ENCODE measurements at regions of chr3 and their contacts with region 1.

Region 1: DNA sequence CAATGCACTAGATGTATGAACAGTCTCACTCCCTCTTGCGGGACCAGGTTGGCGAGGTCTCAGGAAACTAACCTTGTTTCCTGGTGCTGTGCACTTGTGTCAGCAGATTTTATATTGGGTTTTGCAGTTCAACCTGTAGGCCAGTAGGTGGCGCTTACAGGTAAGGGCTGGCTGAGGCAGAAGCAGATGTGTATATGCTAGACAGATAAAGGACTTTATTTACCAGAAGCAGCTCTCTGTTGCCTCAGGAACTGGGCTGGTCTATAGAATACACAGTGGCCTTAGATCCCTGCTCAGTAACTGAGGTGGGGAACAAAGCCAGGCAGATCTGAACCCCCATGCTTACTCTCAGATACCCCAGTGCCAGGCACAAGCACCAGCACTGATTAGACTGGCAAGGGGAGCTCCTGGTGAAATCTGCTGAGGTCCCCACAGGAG is 296.8 kb downstream of the DOCK3 start:
- DNase-seq: no peak
- ATAC-seq: peak; percentile 93
- H3K4me3 ChIP-seq: no peak overlapping the region
- H3K27ac ChIP-seq: no peak overlapping the region
- H3K4me1 ChIP-seq: no peaks in the 10 kb centered on the region
- H3K27me3 ChIP-seq: no peaks in the 10 kb centered on the region
- CTCF ChIP-seq: peak; percentile 88 to 96 (median 91)
- EP300 ChIP-seq: no peak
- POLR2A ChIP-seq: no peak
- RAD21 ChIP-seq: peak; percentile 84

Region 2: GRCh38 chr3:50777680-50778079 is 193.8 kb before region 1 on chr3:
- CTCF ChIA-PET with region 1: no interaction called
- POLR2A ChIA-PET with region 1: no interaction called
- RAD21 ChIA-PET with region 1: no interaction called
- SMC1A ChIA-PET with region 1: no interaction called
- in situ Hi-C with region 1: no loop called
- intact Hi-C with region 1: no loop called
- DNase-seq: no peak
- ATAC-seq: no peak
- H3K4me3 ChIP-seq: no peak overlapping the region
- H3K27ac ChIP-seq: no peak overlapping the region
- H3K4me1 ChIP-seq: no peaks in the 10 kb centered on the region
- H3K27me3 ChIP-seq: no peaks in the 10 kb centered on the region
- CTCF ChIP-seq: no peak
- EP300 ChIP-seq: no peak
- POLR2A ChIP-seq: no peak
- RAD21 ChIP-seq: no peak

Region 3: DNA sequence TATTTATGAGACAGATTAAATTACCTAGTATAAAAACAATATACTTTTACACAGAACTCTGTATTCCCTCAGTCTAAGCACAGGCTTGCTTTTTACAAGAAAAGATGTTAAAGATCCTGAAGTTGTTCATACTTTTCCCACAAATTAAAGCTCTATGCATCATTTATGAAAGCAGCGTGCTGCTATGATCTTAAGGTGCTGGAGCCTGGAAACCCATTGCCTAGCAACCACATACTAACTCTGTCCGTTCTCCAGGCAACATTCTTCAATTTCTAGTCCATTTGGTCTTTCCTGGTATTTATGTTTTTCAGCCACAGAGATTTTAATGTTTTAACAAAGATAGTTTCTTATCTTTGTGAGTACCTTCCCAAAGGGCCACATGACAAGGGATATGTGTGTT is 15.2 kb after region 1 on chr3:
- CTCF ChIA-PET with region 1: no interaction called
- POLR2A ChIA-PET with region 1: no interaction called
- RAD21 ChIA-PET with region 1: no interaction called
- SMC1A ChIA-PET with region 1: no interaction called
- in situ Hi-C with region 1: no loop called
- intact Hi-C with region 1: no loop called
- DNase-seq: no peak
- ATAC-seq: no peak
- H3K4me3 ChIP-seq: no peak overlapping the region
- H3K27ac ChIP-seq: no peak overlapping the region
- H3K4me1 ChIP-seq: no peaks in the 10 kb centered on the region
- H3K27me3 ChIP-seq: no peaks in the 10 kb centered on the region
- CTCF ChIP-seq: no peak
- EP300 ChIP-seq: no peak
- POLR2A ChIP-seq: no peak
- RAD21 ChIP-seq: no peak

Region 4: DNA sequence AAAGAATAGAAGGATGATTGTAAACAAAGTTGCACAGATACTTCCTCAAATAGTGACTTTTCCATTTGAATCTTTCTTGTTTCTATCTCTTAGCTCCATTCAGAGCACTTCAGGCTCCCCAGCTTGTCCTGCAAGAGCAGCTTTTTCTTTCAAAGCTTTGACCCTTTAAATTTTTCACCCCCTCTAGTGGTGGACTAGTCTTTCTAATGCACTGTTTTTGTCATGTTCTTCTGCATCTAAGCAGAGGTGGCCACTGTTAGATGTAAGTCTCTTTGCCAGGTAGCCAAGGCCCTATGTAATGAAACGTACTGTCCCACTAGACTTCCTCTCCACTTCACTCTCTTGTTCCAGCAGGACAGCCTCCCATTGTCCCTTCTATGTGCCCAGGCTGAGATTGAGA is 339.5 kb after region 1 on chr3:
- CTCF ChIA-PET with region 1: interaction called, 3 read pairs
- POLR2A ChIA-PET with region 1: no interaction called
- RAD21 ChIA-PET with region 1: no interaction called
- SMC1A ChIA-PET with region 1: no interaction called
- in situ Hi-C with region 1: no loop called
- intact Hi-C with region 1: loop called (anchors 2 kb)
- DNase-seq: no peak
- ATAC-seq: peak; percentile 60
- H3K4me3 ChIP-seq: no peak overlapping the region
- H3K27ac ChIP-seq: no peak overlapping the region
- H3K4me1 ChIP-seq: no peaks in the 10 kb centered on the region
- H3K27me3 ChIP-seq: no peaks in the 10 kb centered on the region; a peak in 1 of 4 replicates
- CTCF ChIP-seq: peak; percentile 33 to 44 (median 35); a peak in 4 of 6 replicates
- EP300 ChIP-seq: no peak
- POLR2A ChIP-seq: no peak
- RAD21 ChIP-seq: peak; percentile 54

Region 5: DNA sequence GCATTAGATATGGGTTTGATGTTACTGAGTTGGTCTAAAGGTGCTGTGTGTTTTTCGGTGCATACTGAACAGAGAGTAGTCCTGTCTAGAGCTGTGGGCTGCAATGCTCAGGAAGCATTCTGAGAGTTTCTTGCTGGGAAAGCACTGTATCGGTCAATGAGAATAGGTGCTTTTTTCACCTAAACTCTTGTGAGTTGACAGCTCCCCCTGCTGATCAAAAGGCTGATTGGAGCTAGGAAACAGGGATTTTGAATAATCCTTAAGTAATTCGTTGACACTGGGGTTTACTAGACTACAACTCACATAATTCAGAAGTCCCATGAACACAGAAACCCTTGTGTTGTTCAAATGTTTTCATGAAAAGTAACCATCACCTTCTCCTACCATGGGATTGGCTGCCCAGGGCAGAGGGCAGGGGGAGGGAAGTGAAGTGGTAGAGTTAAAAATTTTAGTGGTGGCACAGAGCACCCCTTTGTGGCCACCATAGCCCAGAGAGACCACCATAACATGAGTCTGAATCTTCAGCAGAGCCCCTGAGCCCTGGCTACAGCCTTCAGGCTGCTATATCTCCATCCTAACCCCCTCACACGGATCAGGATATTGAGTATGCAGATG is 400.5 kb after region 1 on chr3:
- CTCF ChIA-PET with region 1: interaction called, 25 read pairs
- POLR2A ChIA-PET with region 1: no interaction called
- RAD21 ChIA-PET with region 1: interaction called, 3 read pairs
- SMC1A ChIA-PET with region 1: interaction called, 9 read pairs
- in situ Hi-C with region 1: loop called (anchors 5 kb)
- intact Hi-C with region 1: loop called (anchors 2 kb)
- DNase-seq: no peak
- ATAC-seq: peak; percentile 85
- H3K4me3 ChIP-seq: no peak overlapping the region
- H3K27ac ChIP-seq: no peak overlapping the region
- H3K4me1 ChIP-seq: no peaks in the 10 kb centered on the region
- H3K27me3 ChIP-seq: no peaks in the 10 kb centered on the region; a peak in 1 of 4 replicates
- CTCF ChIP-seq: peak; percentile 62 to 72 (median 67)
- EP300 ChIP-seq: no peak
- POLR2A ChIP-seq: no peak
- RAD21 ChIP-seq: peak; percentile 84

Region 6: DNA sequence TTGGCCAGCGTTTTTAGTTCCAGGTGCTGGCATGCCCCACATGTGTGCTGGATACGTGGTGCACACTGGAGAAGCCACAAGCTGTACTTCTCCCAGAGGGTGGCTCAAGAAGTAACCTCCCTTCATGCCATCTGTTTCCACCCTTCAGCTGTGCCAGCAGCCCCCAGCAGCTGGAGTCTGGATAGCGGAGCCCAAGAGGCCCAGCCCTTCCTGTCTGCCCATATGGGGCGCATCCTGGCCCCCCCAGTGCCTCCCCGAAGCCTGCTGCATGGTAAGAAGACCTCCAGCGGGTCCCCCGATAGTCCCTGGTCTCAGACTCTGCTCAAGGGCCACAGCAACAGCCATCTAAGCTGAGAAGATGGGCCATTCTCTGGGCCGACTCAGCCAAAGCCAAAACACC is 407.8 kb after region 1 on chr3:
- CTCF ChIA-PET with region 1: interaction called, 3 read pairs
- POLR2A ChIA-PET with region 1: no interaction called
- RAD21 ChIA-PET with region 1: interaction called, 3 read pairs
- SMC1A ChIA-PET with region 1: no interaction called
- in situ Hi-C with region 1: loop called (anchors 5 kb)
- intact Hi-C with region 1: no loop called
- DNase-seq: no peak
- ATAC-seq: no peak
- H3K4me3 ChIP-seq: no peak overlapping the region
- H3K27ac ChIP-seq: no peak overlapping the region
- H3K4me1 ChIP-seq: peaks cover 9% of the 10 kb centered on the region
- H3K27me3 ChIP-seq: no peaks in the 10 kb centered on the region; a peak in 1 of 4 replicates
- CTCF ChIP-seq: no peak
- EP300 ChIP-seq: no peak
- POLR2A ChIP-seq: no peak
- RAD21 ChIP-seq: no peak

Measured in GM12878 (cell line).